ENCODE measurements at regions of chr19 and their contacts with region 1.

Region 1: GRCh38 chr19:54653181-54653809 is 9.5 kb upstream of the LILRB4 start:
- DNase-seq: peak; percentile 59
- CTCF ChIP-seq: peak; percentile 66

Region 2: DNA sequence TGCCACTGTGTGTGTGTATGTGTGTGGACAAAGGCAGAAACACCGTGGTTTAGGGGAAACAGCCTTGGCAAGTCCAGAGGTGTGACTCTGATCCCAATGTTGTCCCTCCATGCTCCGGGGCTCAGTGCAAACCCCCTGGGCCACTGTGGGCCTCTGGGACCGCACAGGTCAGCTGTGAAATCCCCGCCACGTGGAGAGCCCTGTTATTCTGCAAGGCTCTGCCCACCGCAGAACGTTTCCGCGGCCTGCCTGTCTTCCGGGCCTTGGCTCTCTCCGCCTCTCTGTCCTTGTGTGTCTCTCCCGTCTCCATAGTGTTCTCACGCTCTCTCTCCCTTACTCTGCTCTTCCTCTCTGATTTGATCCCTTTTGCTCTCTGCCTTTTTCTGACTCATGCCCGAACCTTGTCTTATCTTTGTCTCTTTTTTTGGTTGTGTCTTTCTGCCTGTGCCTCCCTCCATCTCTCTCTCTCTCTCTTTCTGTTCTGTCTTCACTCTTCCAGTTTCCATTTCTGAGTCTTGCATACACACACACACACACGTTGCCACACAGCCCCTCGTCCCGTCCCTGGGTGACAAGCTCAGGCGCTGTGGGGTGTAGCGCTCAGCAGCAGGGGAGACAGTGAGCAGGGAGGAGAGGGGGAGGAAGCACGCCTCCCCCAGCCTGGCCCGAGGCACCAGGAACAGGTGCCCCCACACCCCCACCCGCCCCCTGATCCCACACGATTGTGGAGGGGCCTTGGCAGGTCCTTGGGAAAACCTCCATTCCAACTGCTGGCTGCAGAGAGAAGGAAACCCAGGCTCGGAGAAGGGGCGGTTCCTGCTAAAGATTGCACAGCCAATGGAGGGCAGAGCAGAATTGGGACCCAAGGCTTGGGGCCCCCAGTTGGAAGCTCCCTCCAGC is 235.0 kb before region 1 on chr19:
- CTCF ChIA-PET with region 1: no interaction called
- POLR2A ChIA-PET with region 1: no interaction called
- DNase-seq: peak; percentile 71
- CTCF ChIP-seq: no peak

Region 3: GRCh38 chr19:54481322-54481930 is 171.9 kb before region 1 on chr19:
- CTCF ChIA-PET with region 1: interaction called, 62 read pairs
- POLR2A ChIA-PET with region 1: no interaction called
- DNase-seq: peak; percentile 61
- CTCF ChIP-seq: peak; percentile 58

Region 4: DNA sequence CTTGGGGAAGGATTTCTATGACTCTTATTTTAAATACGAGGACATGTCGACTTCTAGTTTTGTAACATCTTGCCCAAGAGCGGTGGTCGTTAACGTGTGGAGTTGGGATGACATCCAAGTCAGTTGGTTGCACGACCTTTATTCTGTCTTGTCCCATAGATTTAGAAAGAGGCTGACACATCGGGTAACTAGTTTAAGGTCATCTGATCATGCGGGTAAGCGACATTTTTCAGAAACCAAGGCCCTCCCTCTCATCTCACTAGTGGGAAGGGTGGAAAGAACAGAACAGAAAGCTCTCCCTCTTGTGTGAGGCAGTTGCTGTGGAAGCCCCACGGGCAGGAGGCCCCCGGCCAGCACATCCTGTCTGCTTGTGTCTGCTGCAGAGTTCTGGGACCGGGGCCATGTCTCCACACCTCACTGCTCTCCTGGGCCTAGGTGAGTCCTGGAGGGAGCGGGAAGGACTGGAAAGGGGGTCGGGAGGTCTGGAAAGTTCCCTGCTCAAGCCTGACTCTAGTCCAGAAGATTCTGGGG is 150.7 kb before region 1 on chr19 and contains the start of gene LAIR2:
- CTCF ChIA-PET with region 1: no interaction called
- POLR2A ChIA-PET with region 1: no interaction called
- DNase-seq: no peak
- CTCF ChIP-seq: no peak

Region 5: GRCh38 chr19:54594737-54595136 is 58.6 kb before region 1 on chr19:
- CTCF ChIA-PET with region 1: no interaction called
- POLR2A ChIA-PET with region 1: no interaction called
- DNase-seq: no peak
- CTCF ChIP-seq: no peak

Region 6: GRCh38 chr19:54616821-54617560 is 36.3 kb before region 1 on chr19:
- CTCF ChIA-PET with region 1: interaction called, 21 read pairs
- POLR2A ChIA-PET with region 1: no interaction called
- DNase-seq: peak; percentile 61
- CTCF ChIP-seq: no peak

Region 7: GRCh38 chr19:54622431-54622830 is 30.9 kb before region 1 on chr19:
- CTCF ChIA-PET with region 1: interaction called, 21 read pairs
- POLR2A ChIA-PET with region 1: no interaction called
- DNase-seq: no peak
- CTCF ChIP-seq: no peak

Region 8: GRCh38 chr19:54630782-54631181 is 22.5 kb before region 1 on chr19:
- CTCF ChIA-PET with region 1: interaction called, 15 read pairs
- POLR2A ChIA-PET with region 1: no interaction called
- DNase-seq: no peak
- CTCF ChIP-seq: no peak

Region 9: GRCh38 chr19:54638683-54639082 is 14.6 kb before region 1 on chr19:
- CTCF ChIA-PET with region 1: interaction called, 45 read pairs
- POLR2A ChIA-PET with region 1: no interaction called
- DNase-seq: no peak
- CTCF ChIP-seq: no peak

Region 10: GRCh38 chr19:54674021-54674617 is 20.8 kb after region 1 on chr19:
- CTCF ChIA-PET with region 1: interaction called, 542 read pairs
- POLR2A ChIA-PET with region 1: no interaction called
- DNase-seq: peak; percentile 44
- CTCF ChIP-seq: peak; percentile 78